BJ (cell line): ENCODE measurements at regions of chr13 and their contacts with region 1.

Region 1: GRCh38 chr13:101594936-101595335 is 142.5 kb downstream of the ITGBL1 start:
- DNase-seq: no peak
- H3K4me3 ChIP-seq: no peak overlapping the region
- H3K27me3 ChIP-seq: no peaks in the 10 kb centered on the region
- CTCF ChIP-seq: no peak

Region 2: GRCh38 chr13:101611491-101612475 is 16.8 kb after region 1 on chr13:
- CTCF ChIA-PET with region 1: no interaction called
- POLR2A ChIA-PET with region 1: interaction called, 11 read pairs
- DNase-seq: no peak
- H3K4me3 ChIP-seq: no peak overlapping the region
- H3K27me3 ChIP-seq: no peaks in the 10 kb centered on the region
- CTCF ChIP-seq: no peak